PC-3 (cell line): ENCODE measurements at regions of chr9 and their contacts with region 1.

Region 1: GRCh38 chr9:34376596-34377403 is at the start of gene MYORG:
- DNase-seq: peak; percentile 93
- ATAC-seq: peak; percentile 79
- H3K4me3 ChIP-seq: peak within 1 kb of the TSS; percentile 82
- H3K27ac ChIP-seq: no peak within 1 kb of the TSS
- H3K4me1 ChIP-seq: peaks cover 14% of the 10 kb centered on the region
- H3K27me3 ChIP-seq: no peaks in the 10 kb centered on the region
- CTCF ChIP-seq: no peak
- total RNA-seq, gene MYORG: 3.4 and 4.7 TPM in 2 replicates

Region 2: DNA sequence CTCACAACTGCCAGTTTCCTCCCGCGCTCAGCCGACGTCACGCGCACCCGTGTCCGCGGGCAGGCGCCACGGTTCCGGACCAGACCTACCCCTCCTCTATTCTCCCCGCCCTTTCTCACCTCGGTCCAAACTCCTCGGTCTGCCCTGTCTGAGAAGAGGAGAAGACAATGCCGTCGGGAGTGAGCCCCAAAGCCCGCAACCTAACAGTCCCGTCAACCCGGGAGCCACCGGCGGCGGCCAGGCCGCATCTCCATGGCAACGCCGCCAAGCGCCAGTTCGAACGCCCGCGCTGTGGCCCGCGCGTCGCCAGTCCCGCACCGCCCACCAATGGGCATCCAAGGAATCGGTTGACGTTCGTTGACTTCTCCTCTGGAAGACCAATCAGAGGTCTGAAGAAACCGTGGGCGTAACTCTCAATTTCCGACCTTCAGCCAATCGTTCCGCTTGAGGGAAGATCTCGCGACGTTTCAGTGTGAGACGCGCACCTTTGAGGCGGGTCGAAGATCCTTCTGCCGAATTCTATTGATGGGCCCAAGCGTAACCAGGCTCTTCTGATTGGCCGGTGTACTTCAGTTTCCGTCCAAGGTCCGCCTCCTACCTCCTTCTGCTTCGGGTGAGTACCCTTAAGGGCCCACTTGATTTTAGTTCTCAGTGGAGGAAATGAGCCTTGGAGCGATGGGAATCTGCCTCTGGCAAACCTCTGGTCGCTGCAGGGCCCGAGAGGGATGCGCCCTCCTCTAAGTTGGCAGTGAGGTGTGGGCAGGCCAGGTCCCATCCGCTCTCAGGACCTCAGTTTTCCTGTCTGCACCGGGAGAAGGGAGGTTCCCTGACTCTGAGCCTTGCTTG is 47.6 kb before region 1 on chr9 and contains the starts of genes KIF24 and NUDT2:
- CTCF ChIA-PET with region 1: no interaction called
- POLR2A ChIA-PET with region 1: interaction called, 4 read pairs
- intact Hi-C with region 1: loop called (anchors 1 kb)
- DNase-seq: peak; percentile 99
- ATAC-seq: peak; percentile 94
- H3K4me3 ChIP-seq: peak within 1 kb of the TSS; percentile 89
- H3K27ac ChIP-seq: peak within 1 kb of the TSS; percentile 52
- H3K4me1 ChIP-seq: peaks cover 17% of the 10 kb centered on the region; the same call in 1 of the 2 replicates
- H3K27me3 ChIP-seq: no peaks in the 10 kb centered on the region
- CTCF ChIP-seq: no peak
- total RNA-seq, gene KIF24: 4.7 and 5.0 TPM in 2 replicates
- total RNA-seq, gene NUDT2: 34.4 and 34.6 TPM in 2 replicates

Region 3: GRCh38 chr9:34343090-34343489 is 33.7 kb before region 1 on chr9:
- CTCF ChIA-PET with region 1: no interaction called
- POLR2A ChIA-PET with region 1: interaction called, 19 read pairs
- intact Hi-C with region 1: no loop called
- DNase-seq: no peak
- ATAC-seq: no peak
- H3K4me3 ChIP-seq: no peak overlapping the region
- H3K27ac ChIP-seq: no peak overlapping the region
- H3K4me1 ChIP-seq: no peaks in the 10 kb centered on the region
- H3K27me3 ChIP-seq: no peaks in the 10 kb centered on the region
- CTCF ChIP-seq: no peak

Region 4: GRCh38 chr9:34396276-34397214 is 19.7 kb after region 1 on chr9:
- CTCF ChIA-PET with region 1: no interaction called
- POLR2A ChIA-PET with region 1: no interaction called
- intact Hi-C with region 1: no loop called
- DNase-seq: no peak
- ATAC-seq: no peak
- H3K4me3 ChIP-seq: no peak overlapping the region
- H3K27ac ChIP-seq: no peak overlapping the region
- H3K4me1 ChIP-seq: no peaks in the 10 kb centered on the region
- H3K27me3 ChIP-seq: no peaks in the 10 kb centered on the region
- CTCF ChIP-seq: no peak

Region 5: DNA sequence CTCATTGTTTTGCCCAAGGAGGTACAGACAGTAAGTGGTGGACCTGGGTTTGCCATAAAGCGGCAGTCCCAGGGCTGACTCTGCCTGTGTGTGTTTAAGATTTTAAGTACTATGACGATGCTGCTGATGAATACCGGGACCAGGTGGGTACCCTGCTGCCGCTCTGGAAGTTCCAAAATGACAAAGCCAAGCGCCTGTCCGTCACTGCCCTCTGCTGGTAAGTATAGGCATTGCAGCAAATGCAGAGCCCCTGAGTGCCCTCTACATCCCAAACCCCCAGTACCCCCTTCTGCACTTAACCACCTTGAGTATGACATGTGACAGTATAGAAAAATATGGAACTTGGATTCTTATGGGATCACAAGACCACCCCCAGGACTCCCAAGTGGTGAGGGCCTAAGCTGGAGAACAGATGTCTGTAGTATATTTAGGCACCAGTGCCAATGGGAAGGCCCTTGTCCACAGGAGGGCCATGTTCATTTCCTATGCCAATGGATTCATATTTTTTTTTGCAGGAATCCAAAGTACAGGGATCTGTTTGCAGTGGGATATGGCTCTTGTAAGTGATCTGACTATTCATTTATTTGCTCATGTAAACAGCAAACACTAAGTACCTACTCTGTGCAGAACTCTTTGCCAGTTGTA is 123.9 kb after region 1 on chr9:
- CTCF ChIA-PET with region 1: no interaction called
- POLR2A ChIA-PET with region 1: no interaction called
- intact Hi-C with region 1: no loop called
- DNase-seq: peak; percentile 74
- ATAC-seq: no peak
- H3K4me3 ChIP-seq: no peak overlapping the region
- H3K27ac ChIP-seq: no peak overlapping the region
- H3K4me1 ChIP-seq: peaks cover 31% of the 10 kb centered on the region
- H3K27me3 ChIP-seq: no peaks in the 10 kb centered on the region
- CTCF ChIP-seq: peak; percentile 88

Region 6: DNA sequence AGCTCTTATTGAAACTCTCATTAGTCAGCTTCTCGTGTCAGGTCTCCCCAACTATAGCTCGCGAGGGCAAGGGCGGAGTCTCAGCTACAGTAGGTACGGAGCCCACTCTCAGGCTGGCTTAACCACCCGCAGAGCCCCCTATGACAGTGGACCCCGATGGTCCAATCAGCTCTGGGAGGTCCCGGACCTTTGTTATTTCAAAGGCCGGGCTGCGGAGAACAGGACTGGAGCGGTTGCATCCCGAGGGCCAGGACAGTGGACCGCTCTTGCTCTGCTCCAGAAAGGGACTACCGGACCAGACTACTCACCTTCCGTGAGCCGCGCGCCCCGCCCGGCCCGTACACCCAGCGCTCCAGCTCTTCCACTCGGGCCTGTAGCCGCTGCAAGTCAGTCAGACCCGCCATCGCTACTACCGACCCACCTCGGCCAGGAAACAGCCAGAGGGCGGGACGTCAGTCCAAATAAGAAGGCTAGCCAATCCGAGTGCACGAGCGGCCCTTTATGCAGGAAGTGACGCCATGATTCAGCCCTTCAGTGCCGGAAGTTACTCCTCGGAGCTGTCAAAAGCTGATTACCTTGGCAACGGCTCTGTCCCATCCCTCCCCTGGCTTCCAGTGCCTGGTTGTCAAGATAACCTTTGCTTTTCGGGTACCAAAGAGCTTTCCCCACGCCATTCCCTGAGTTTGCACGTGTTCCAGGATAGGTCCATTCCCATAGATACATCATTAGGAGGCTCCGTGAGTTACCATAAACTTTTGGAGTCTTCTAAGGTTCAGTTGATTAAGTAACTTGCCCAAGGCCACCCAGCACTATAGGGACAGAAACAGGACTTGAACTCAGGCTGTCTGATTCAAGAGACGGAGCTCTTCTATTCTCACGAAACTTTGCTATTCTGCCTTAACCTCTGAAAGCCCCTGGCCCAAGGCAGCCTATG is 243.5 kb after region 1 on chr9 and contains the start of gene DCTN3:
- CTCF ChIA-PET with region 1: no interaction called
- POLR2A ChIA-PET with region 1: no interaction called
- intact Hi-C with region 1: no loop called
- DNase-seq: peak; percentile 89
- ATAC-seq: peak; percentile 99
- H3K4me3 ChIP-seq: peak within 1 kb of the TSS; percentile 90
- H3K27ac ChIP-seq: no peak within 1 kb of the TSS
- H3K4me1 ChIP-seq: peaks cover 8% of the 10 kb centered on the region; the same call in 1 of the 2 replicates
- H3K27me3 ChIP-seq: no peaks in the 10 kb centered on the region
- CTCF ChIP-seq: no peak
- total RNA-seq, gene DCTN3: 102 and 105 TPM in 2 replicates